Natural killer cell (primary cell): ENCODE measurements at regions of chr1 and their contacts with region 1.

Region 1: GRCh38 chr1:6889875-6890480 is 104.7 kb downstream of the CAMTA1 start:
- DNase-seq: peak; percentile 19 to 64
- ATAC-seq: peak in 1 of 3 donors; percentile 64
- H3K4me3 ChIP-seq: no peak overlapping the region
- H3K4me3 Mint-ChIP-seq: no peak overlapping the region
- H3K27ac ChIP-seq: no peak overlapping the region
- H3K27ac Mint-ChIP-seq: no peak overlapping the region
- H3K4me1 ChIP-seq: no peaks in the 10 kb centered on the region
- H3K4me1 Mint-ChIP-seq: no peaks in the 10 kb centered on the region
- H3K27me3 ChIP-seq: no peaks in the 10 kb centered on the region
- H3K27me3 Mint-ChIP-seq: no peaks in the 10 kb centered on the region
- CTCF ChIP-seq: peak; percentile 63

Region 2: DNA sequence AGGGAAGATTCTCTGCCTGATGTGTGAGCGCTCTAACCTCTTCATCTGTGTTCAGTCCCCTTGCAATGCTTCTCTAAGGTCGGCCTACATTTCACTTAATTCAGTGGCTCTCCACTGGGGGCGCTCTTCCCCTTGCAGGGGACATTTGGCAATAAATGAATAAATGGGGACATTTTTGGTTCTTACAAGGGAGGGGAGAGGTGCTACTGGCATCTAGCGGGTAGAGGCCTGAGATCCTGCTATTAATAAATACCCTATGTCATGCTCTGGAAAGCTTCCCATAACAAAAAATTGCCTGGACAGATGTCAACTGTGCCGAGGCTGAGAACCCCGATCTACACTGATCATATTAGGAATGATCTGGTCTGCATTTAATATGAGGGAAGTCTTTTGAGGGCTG is 162.4 kb before region 1 on chr1:
- intact Hi-C with region 1: loop called (anchors 1 kb)
- DNase-seq: peak; percentile 47 to 72
- ATAC-seq: peak; percentile 62 to 68 (median 63)
- H3K4me3 ChIP-seq: no peak overlapping the region
- H3K4me3 Mint-ChIP-seq: no peak overlapping the region
- H3K27ac ChIP-seq: no peak overlapping the region
- H3K27ac Mint-ChIP-seq: no peak overlapping the region
- H3K4me1 ChIP-seq: no peaks in the 10 kb centered on the region
- H3K4me1 Mint-ChIP-seq: no peaks in the 10 kb centered on the region
- H3K27me3 ChIP-seq: no peaks in the 10 kb centered on the region
- H3K27me3 Mint-ChIP-seq: peaks cover 8 to 9% of the 10 kb centered on the region in 2 donors
- CTCF ChIP-seq: peak; percentile 93

Region 3: GRCh38 chr1:6794164-6794563 is 95.8 kb before region 1 on chr1:
- intact Hi-C with region 1: loop called (anchors 1 kb)
- DNase-seq: peak in 1 of 2 donors; percentile 59
- ATAC-seq: no peak
- H3K4me3 ChIP-seq: no peak overlapping the region
- H3K4me3 Mint-ChIP-seq: no peak overlapping the region
- H3K27ac ChIP-seq: no peak overlapping the region
- H3K27ac Mint-ChIP-seq: no peak overlapping the region
- H3K4me1 ChIP-seq: no peaks in the 10 kb centered on the region
- H3K4me1 Mint-ChIP-seq: peaks cover 11 to 15% of the 10 kb centered on the region in 2 donors
- H3K27me3 ChIP-seq: no peaks in the 10 kb centered on the region
- H3K27me3 Mint-ChIP-seq: no peaks in the 10 kb centered on the region
- CTCF ChIP-seq: peak; percentile 40